Naive thymus-derived CD4-positive, alpha-beta T cell (primary cell): ENCODE measurements at regions of chr2 and their contacts with region 1.

Region 1: GRCh38 chr2:230987137-230988020 is 8.5 kb upstream of the SPATA3 start:
- DNase-seq: peak; percentile 54 to 86 (median 68)
- ATAC-seq: peak; percentile 87
- H3K4me3 ChIP-seq: peak overlapping the region; percentile 59
- H3K4me3 Mint-ChIP-seq: peak overlapping the region; percentile 19 to 68 (median 47)
- H3K27ac ChIP-seq: no peak overlapping the region
- H3K27ac Mint-ChIP-seq: peak overlapping the region in 1 of 9 donors; percentile 40
- H3K4me1 ChIP-seq: peaks cover 4 to 11% of the 10 kb centered on the region in 2 donors
- H3K4me1 Mint-ChIP-seq: peaks cover 0 to 34% (median 3%) of the 10 kb centered on the region in 7 donors
- H3K27me3 ChIP-seq: no peaks in the 10 kb centered on the region
- H3K27me3 Mint-ChIP-seq: peaks cover 6 to 37% (median 13%) of the 10 kb centered on the region in 5 donors

Region 2: DNA sequence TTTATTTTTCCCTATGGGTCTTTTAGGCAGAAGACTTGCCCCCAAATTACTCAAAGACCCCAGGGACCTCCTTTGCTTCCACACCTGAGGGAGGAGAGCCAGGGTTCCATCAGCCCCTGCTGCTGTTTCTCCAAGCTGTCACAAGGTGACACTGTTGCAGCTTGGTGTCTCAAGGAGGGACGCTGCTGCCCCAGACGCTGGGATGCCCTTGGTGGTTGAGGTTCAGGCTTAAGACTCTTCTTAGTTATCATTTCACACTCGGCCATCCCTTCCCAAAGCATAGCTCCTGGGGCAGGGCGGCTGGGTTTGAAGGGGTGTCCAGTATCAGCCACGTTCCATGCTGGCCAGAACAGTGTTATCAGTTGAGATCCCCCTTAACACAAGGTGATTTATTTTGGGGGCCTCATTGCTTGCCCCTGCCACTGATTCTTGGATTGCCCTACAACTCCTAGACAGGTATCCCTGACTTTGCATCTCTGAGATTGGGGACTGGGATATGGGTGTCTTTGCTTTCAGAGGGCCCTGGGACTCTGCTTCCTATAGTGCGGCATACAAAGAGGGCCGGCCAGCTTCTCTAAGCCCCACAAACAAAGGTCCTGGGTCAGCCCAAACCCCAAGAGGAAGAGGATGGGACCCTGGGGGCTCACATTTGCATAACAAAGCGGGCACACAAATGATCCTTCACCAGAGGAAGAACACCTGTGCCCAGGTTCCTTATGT is 85.0 kb before region 1 on chr2:
- CTCF ChIA-PET with region 1: interaction called, 4 read pairs
- POLR2A ChIA-PET with region 1: no interaction called
- intact Hi-C with region 1: loop called (anchors 1 kb)
- DNase-seq: peak in 4 of 9 donors; percentile 22 to 49 (median 32)
- ATAC-seq: peak; percentile 71
- H3K4me3 ChIP-seq: no peak overlapping the region
- H3K4me3 Mint-ChIP-seq: no peak overlapping the region
- H3K27ac ChIP-seq: no peak overlapping the region
- H3K27ac Mint-ChIP-seq: peak overlapping the region in 1 of 9 donors; percentile 21
- H3K4me1 ChIP-seq: peaks cover 6 to 13% of the 10 kb centered on the region in 2 donors
- H3K4me1 Mint-ChIP-seq: peaks cover 2 to 25% (median 23%) of the 10 kb centered on the region in 7 donors
- H3K27me3 ChIP-seq: no peaks in the 10 kb centered on the region
- H3K27me3 Mint-ChIP-seq: peaks cover 0 to 46% (median 6%) of the 10 kb centered on the region in 5 donors

Region 3: GRCh38 chr2:231068525-231069222 is 81.3 kb after region 1 on chr2:
- CTCF ChIA-PET with region 1: no interaction called
- POLR2A ChIA-PET with region 1: no interaction called
- intact Hi-C with region 1: no loop called
- DNase-seq: no peak
- ATAC-seq: peak; percentile 74
- H3K4me3 ChIP-seq: no peak overlapping the region
- H3K4me3 Mint-ChIP-seq: no peak overlapping the region
- H3K27ac ChIP-seq: no peak overlapping the region
- H3K27ac Mint-ChIP-seq: no peak overlapping the region
- H3K4me1 ChIP-seq: no peaks in the 10 kb centered on the region
- H3K4me1 Mint-ChIP-seq: peaks cover 0 to 10% (median 0%) of the 10 kb centered on the region in 7 donors
- H3K27me3 ChIP-seq: no peaks in the 10 kb centered on the region
- H3K27me3 Mint-ChIP-seq: no peaks in the 10 kb centered on the region